Posterior vena cava (tissue), 2 donors: ENCODE measurements at regions of chr10 and their contacts with region 1.

Region 1: GRCh38 chr10:69835875-69836730 is 34.4 kb downstream of the COL13A1 start:
- DNase-seq: no peak

Region 2: GRCh38 chr10:69860271-69860670 is 24.2 kb after region 1 on chr10:
- intact Hi-C with region 1: loop called in 1 of 2 experiments (anchors 1 kb)
- DNase-seq: no peak